ENCODE measurements at regions of chr4 and their contacts with region 1.

Region 1: DNA sequence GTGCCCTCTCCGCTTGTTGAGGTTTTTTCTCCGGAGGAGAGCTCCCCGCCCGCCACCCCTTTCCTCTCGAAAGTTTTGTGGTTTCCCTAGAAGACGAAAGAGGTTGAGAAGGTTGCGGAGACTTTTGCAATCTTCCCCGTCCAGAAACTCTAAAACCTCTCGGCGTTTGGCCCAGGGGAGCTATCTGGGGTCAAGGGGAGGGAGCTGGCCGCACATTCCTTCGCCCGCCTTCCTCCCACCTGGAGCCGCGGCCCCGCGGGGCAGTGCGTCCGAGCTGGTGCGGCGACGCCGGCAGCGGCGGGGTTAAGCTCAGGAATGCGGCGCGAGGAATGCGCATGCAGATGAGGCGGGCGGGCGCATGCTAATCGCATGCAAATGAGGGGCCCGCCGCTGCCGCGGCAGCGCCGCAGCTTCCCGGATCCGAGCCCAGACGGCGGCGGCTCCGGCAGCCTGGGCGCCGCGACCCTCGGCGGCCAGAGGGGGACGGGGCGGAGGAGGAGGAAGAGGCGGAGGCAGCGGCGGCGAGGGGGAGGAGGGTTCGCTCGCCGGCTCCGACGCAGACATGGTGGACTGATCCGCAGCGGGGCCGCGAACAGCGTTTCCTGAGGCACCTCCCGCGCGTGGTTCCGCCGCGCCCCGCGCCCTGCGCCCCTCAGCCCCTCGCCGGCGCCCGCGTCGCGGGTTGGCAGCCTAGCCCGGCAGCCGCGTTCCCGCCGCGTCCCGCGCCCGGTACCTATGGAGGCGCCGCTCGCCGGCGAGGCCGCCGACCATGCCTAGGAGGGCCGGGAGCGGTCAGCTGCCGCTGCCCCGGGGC is at the start of gene WWC2:
- H3K4me3 Mint-ChIP-seq: peak within 1 kb of the TSS; percentile 89
- H3K27ac Mint-ChIP-seq: peak within 1 kb of the TSS; percentile 86
- H3K4me1 Mint-ChIP-seq: peaks cover 13% of the 10 kb centered on the region
- H3K27me3 Mint-ChIP-seq: peaks cover 49% of the 10 kb centered on the region

Region 2: DNA sequence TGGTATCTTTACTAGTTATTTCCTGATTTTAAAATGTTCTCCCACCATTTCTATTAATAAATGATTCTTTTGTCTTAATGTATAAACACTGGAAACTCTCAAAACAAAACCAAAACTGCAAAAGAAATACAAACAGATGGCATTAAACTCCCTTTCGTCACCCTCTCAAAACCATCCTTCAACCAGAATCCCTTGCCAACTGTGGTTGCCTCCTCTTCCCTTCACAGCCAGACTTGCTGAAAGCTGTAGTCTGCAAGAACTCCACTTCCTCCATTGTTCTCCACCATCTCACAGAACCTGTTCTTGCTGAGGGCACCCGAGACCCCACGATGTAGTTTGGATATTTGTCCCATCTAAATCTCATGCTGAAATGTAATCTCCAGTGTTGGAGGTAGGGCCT is 96.6 kb after region 1 on chr4:
- intact Hi-C with region 1: loop called (anchors 10 kb)
- H3K4me3 Mint-ChIP-seq: no peak overlapping the region
- H3K27ac Mint-ChIP-seq: peak overlapping the region; percentile 4
- H3K4me1 Mint-ChIP-seq: peaks cover 21% of the 10 kb centered on the region
- H3K27me3 Mint-ChIP-seq: no peaks in the 10 kb centered on the region

Region 3: GRCh38 chr4:183348706-183349659 is 250.1 kb after region 1 on chr4:
- intact Hi-C with region 1: loop called (anchors 2 kb)
- H3K4me3 Mint-ChIP-seq: no peak overlapping the region
- H3K27ac Mint-ChIP-seq: peak overlapping the region; percentile 84
- H3K4me1 Mint-ChIP-seq: peaks cover 31% of the 10 kb centered on the region
- H3K27me3 Mint-ChIP-seq: peaks cover 10% of the 10 kb centered on the region

Region 4: GRCh38 chr4:183398227-183399125 is 299.5 kb after region 1 on chr4:
- intact Hi-C with region 1: loop called (anchors 2 kb)
- H3K4me3 Mint-ChIP-seq: peak overlapping the region; percentile 82
- H3K27ac Mint-ChIP-seq: peak overlapping the region; percentile 97
- H3K4me1 Mint-ChIP-seq: peaks cover 42% of the 10 kb centered on the region
- H3K27me3 Mint-ChIP-seq: peaks cover 10% of the 10 kb centered on the region

Region 5: GRCh38 chr4:183504064-183504929 is 405.4 kb after region 1 on chr4:
- intact Hi-C with region 1: loop called (anchors 10 kb)
- H3K4me3 Mint-ChIP-seq: peak overlapping the region; percentile 86
- H3K27ac Mint-ChIP-seq: peak overlapping the region; percentile 99
- H3K4me1 Mint-ChIP-seq: peaks cover 25% of the 10 kb centered on the region
- H3K27me3 Mint-ChIP-seq: no peaks in the 10 kb centered on the region

Region 6: GRCh38 chr4:183659029-183659871 is 560.3 kb after region 1 on chr4 and contains the starts of genes RWDD4 and TRAPPC11:
- intact Hi-C with region 1: loop called (anchors 5 kb)
- H3K4me3 Mint-ChIP-seq: peak within 1 kb of the TSS; percentile 87
- H3K27ac Mint-ChIP-seq: peak within 1 kb of the TSS; percentile 91
- H3K4me1 Mint-ChIP-seq: peaks cover 33% of the 10 kb centered on the region
- H3K27me3 Mint-ChIP-seq: no peaks in the 10 kb centered on the region